Activated T-helper 1 cell treated with anti-CD3 and anti-CD28 coated beads, Interleukin-12 subunit alpha, Interleukin-12 subunit beta, Interleukin-2, Interleukin-4 antibody, amounts not matched to agents 30 ng/mL and 10 ng/mL and 1 ng/mL, durations not matched to agents 14 hours and 24 hours and 36 hours (primary cell): ENCODE measurements at regions of chr13 and their contacts with region 1.

Region 1: DNA sequence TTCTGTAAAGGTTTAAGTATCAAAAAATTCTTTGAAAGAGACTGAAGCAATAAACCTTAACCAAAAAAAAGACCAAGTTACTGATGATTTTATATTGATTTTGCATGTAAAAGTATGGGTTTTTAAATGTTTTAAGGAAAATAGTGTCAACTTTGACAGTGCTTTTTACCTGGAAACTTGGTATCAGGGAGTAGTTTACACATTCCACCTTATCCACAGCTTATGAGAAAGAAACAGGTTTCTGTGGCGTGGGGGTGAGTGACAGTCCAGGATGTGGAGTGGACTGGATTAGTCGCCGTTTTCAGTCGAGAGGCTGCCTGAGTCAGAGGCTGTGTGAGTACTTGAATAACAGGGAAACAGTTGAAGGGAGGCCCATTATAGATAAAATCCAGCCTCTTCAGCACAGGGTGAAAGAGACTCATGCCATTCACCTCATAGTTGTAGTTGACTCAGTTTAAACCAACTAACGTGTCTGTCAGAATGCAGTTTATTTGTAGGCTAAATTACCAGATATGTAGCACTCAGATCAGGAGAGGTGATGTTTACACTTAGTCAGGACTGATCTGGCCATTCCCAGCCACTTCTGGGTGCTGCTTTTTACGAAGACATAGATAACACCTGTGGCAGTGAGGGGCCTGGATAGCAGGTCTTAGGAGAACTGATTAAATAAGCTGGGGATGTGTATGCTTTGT is 595 bp upstream of the GPR183 start:
- DNase-seq: peak; percentile 42
- H3K4me3 Mint-ChIP-seq: peak overlapping the region; percentile 83
- H3K27ac Mint-ChIP-seq: peak overlapping the region; percentile 87
- H3K4me1 Mint-ChIP-seq: peaks cover 88% of the 10 kb centered on the region
- H3K27me3 Mint-ChIP-seq: no peaks in the 10 kb centered on the region

Region 2: DNA sequence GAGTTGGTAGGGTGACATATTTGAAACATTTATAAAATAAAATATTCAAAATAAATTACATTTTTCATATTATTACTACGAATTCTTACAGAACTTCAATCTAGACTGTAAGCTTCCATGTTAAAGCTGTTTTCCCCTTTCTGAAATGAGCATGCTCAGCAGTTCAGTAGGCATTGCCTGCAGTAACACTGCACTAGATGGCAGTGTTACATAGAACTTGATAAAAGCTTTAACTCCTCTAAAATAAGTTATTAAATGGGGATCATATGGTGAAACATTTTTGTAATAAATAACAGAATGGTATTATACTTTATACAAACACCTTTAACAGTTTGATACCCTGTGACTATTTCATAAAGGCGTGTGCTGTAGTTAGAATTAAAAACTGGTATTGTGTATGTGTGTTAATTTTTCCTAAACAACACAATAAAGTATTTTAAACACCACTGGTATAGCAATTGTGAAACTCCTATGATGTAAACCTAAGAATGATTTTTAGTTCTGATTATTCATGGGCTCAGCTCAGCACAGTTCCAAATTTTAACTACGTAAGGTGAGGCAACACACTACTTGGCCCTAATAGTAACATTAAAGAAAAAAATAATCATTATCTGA is 38.1 kb before region 1 on chr13:
- intact Hi-C with region 1: loop called (anchors 1 kb)
- DNase-seq: no peak
- H3K4me3 Mint-ChIP-seq: no peak overlapping the region
- H3K27ac Mint-ChIP-seq: no peak overlapping the region
- H3K4me1 Mint-ChIP-seq: peaks cover 55% of the 10 kb centered on the region
- H3K27me3 Mint-ChIP-seq: no peaks in the 10 kb centered on the region

Region 3: GRCh38 chr13:99288089-99288488 is 19.7 kb before region 1 on chr13:
- intact Hi-C with region 1: loop called (anchors 1 kb)
- DNase-seq: no peak
- H3K4me3 Mint-ChIP-seq: peak overlapping the region; percentile 6
- H3K27ac Mint-ChIP-seq: peak overlapping the region; percentile 50
- H3K4me1 Mint-ChIP-seq: peaks cover 61% of the 10 kb centered on the region
- H3K27me3 Mint-ChIP-seq: no peaks in the 10 kb centered on the region

Region 4: GRCh38 chr13:99296398-99296797 is 11.4 kb before region 1 on chr13:
- intact Hi-C with region 1: loop called (anchors 1 kb)
- DNase-seq: no peak
- H3K4me3 Mint-ChIP-seq: peak overlapping the region; percentile 77
- H3K27ac Mint-ChIP-seq: peak overlapping the region; percentile 95
- H3K4me1 Mint-ChIP-seq: peaks cover 73% of the 10 kb centered on the region
- H3K27me3 Mint-ChIP-seq: no peaks in the 10 kb centered on the region

Region 5: GRCh38 chr13:99356158-99357091 is 48.6 kb after region 1 on chr13:
- intact Hi-C with region 1: loop called (anchors 1 kb)
- DNase-seq: peak; percentile 74
- H3K4me3 Mint-ChIP-seq: peak overlapping the region; percentile 62
- H3K27ac Mint-ChIP-seq: peak overlapping the region; percentile 95
- H3K4me1 Mint-ChIP-seq: peaks cover 99% of the 10 kb centered on the region
- H3K27me3 Mint-ChIP-seq: peaks cover 3% of the 10 kb centered on the region

Region 6: GRCh38 chr13:99606324-99607066 is 298.7 kb after region 1 on chr13:
- intact Hi-C with region 1: loop called (anchors 10 kb)
- DNase-seq: peak; percentile 82
- H3K4me3 Mint-ChIP-seq: peak within 1 kb of the TSS; percentile 89
- H3K27ac Mint-ChIP-seq: peak within 1 kb of the TSS; percentile 81
- H3K4me1 Mint-ChIP-seq: peaks cover 29% of the 10 kb centered on the region
- H3K27me3 Mint-ChIP-seq: peaks cover 4% of the 10 kb centered on the region